ENCODE measurements at regions of chr17 and their contacts with region 1.

Region 1: GRCh38 chr17:33113276-33113990 is 121.8 kb downstream of the SPACA3 start:
- DNase-seq: no peak
- H3K4me3 ChIP-seq: no peak overlapping the region
- H3K27ac ChIP-seq: peak overlapping the region; percentile 61
- H3K4me1 ChIP-seq: peaks cover 28% of the 10 kb centered on the region
- H3K27me3 ChIP-seq: no peaks in the 10 kb centered on the region
- CTCF ChIP-seq: no peak

Region 2: GRCh38 chr17:33127706-33128105 is 14.3 kb after region 1 on chr17:
- CTCF ChIA-PET with region 1: no interaction called
- dilution Hi-C with region 1: no loop called
- in situ Hi-C with region 1: no loop called
- intact Hi-C with region 1: loop called (anchors 2 kb)
- DNase-seq: peak; percentile 92
- H3K4me3 ChIP-seq: no peak overlapping the region
- H3K27ac ChIP-seq: peak overlapping the region; percentile 60
- H3K4me1 ChIP-seq: peaks cover 21% of the 10 kb centered on the region
- H3K27me3 ChIP-seq: no peaks in the 10 kb centered on the region
- CTCF ChIP-seq: no peak

Region 3: GRCh38 chr17:33164169-33164881 is 50.9 kb after region 1 on chr17:
- CTCF ChIA-PET with region 1: no interaction called
- dilution Hi-C with region 1: no loop called
- in situ Hi-C with region 1: no loop called
- intact Hi-C with region 1: loop called (anchors 2 kb)
- DNase-seq: peak; percentile 71
- H3K4me3 ChIP-seq: no peak overlapping the region
- H3K27ac ChIP-seq: no peak overlapping the region
- H3K4me1 ChIP-seq: peaks cover 21% of the 10 kb centered on the region
- H3K27me3 ChIP-seq: no peaks in the 10 kb centered on the region
- CTCF ChIP-seq: no peak